Ascending aorta (tissue), 2 donors: ENCODE measurements at regions of chr15 and their contacts with region 1.

Region 1: GRCh38 chr15:48645558-48646330 is at the start of gene FBN1:
- DNase-seq: peak; percentile 23 to 89
- H3K4me3 ChIP-seq: peak within 1 kb of the TSS; percentile 87 to 88
- H3K27ac ChIP-seq: peak within 1 kb of the TSS; percentile 96 to 97
- H3K4me1 ChIP-seq: peaks cover 0 to 11% of the 10 kb centered on the region in 2 donors
- H3K27me3 ChIP-seq: no peaks in the 10 kb centered on the region
- CTCF ChIP-seq: no peak
- total RNA-seq, gene FBN1: 164 TPM

Region 2: GRCh38 chr15:48414015-48414414 is 231.7 kb before region 1 on chr15:
- intact Hi-C with region 1: loop called (anchors 10 kb)
- DNase-seq: peak in 1 of 2 donors; percentile 88
- H3K4me3 ChIP-seq: no peak overlapping the region
- H3K27ac ChIP-seq: peak overlapping the region; percentile 70 to 81
- H3K4me1 ChIP-seq: peaks cover 0 to 49% of the 10 kb centered on the region in 2 donors
- H3K27me3 ChIP-seq: no peaks in the 10 kb centered on the region
- CTCF ChIP-seq: no peak

Region 3: GRCh38 chr15:48536681-48537091 is 109.1 kb before region 1 on chr15:
- intact Hi-C with region 1: loop called (anchors 5 kb)
- DNase-seq: no peak
- H3K4me3 ChIP-seq: no peak overlapping the region
- H3K27ac ChIP-seq: peak overlapping the region; percentile 6 to 36
- H3K4me1 ChIP-seq: peaks cover 0 to 5% of the 10 kb centered on the region in 2 donors
- H3K27me3 ChIP-seq: no peaks in the 10 kb centered on the region
- CTCF ChIP-seq: no peak

Region 4: DNA sequence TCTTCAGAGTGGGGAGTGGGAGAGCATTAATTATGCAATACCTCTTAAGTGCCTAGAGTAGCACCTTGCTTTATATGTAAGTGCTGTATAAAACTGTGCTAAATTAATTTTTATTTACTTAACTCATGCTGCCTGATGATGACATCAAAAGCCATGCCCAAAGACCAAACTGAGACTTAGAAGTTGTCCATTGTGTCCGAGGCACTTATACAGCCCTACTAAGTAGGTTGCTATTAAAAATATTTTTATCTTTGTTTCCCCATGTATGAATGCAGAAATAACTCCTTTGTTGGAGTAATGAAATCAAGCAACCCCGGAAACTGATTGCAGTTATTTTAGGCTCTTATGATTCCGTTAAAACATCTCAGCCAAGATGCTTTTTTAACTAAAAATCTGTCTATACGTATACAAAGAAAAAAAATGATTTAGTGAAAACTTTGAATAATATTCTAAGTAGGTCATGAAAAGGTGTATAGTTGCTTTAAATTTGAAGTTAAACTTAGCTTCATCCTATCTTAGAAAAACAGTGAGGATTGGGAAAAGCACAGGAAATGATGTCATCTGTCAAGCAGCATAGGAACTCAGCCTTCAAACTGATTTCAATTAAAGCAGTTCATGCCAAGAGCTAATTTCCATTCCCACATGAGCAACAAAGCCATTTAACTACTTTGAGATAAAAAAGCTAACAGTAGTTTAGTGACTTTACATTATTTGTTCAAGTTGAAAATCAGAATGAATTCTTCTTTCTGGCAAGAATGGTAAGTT is 43.2 kb before region 1 on chr15:
- intact Hi-C with region 1: loop called (anchors 1 kb)
- DNase-seq: no peak
- H3K4me3 ChIP-seq: peak overlapping the region in 1 of 2 donors; percentile 40
- H3K27ac ChIP-seq: peak overlapping the region; percentile 69 to 79
- H3K4me1 ChIP-seq: peaks cover 0 to 27% of the 10 kb centered on the region in 2 donors
- H3K27me3 ChIP-seq: no peaks in the 10 kb centered on the region
- CTCF ChIP-seq: no peak

Region 5: GRCh38 chr15:48999314-48999713 is 353.6 kb after region 1 on chr15:
- intact Hi-C with region 1: no loop called
- DNase-seq: no peak
- H3K4me3 ChIP-seq: no peak overlapping the region
- H3K27ac ChIP-seq: no peak overlapping the region
- H3K4me1 ChIP-seq: no peaks in the 10 kb centered on the region
- H3K27me3 ChIP-seq: no peaks in the 10 kb centered on the region
- CTCF ChIP-seq: no peak